Activated CD8-positive, alpha-beta T cell treated with anti-CD3 and anti-CD28 coated beads for 36 hours (primary cell): ENCODE measurements at regions of chr7 and their contacts with region 1.

Region 1: GRCh38 chr7:116929914-116930913 is 23.1 kb upstream of the ST7 start:
- DNase-seq: peak; percentile 85
- ATAC-seq: peak; percentile 92
- H3K4me3 Mint-ChIP-seq: no peak overlapping the region
- H3K27ac Mint-ChIP-seq: no peak overlapping the region
- H3K4me1 Mint-ChIP-seq: peaks cover 3% of the 10 kb centered on the region
- H3K27me3 Mint-ChIP-seq: peaks cover 1% of the 10 kb centered on the region
- CTCF ChIP-seq: peak; percentile 93

Region 2: DNA sequence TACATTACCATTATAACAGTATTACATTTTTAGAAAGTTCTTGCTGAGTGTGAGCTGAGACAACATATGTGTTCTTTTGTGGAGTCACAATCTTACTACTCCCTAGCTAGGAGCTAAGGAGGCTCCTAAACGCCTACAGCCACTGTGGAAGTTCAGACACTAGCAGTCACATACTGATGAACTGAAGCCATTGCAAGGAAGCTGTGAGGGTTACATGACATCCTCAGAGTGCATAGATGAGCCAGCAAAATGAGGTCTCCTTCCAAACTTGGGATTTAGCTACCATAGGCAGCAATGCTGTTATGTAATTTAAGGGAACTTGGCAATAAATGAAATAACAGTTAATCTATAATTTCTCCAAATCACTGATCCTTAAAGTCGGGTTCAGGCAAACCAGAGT is 12.3 kb after region 1 on chr7:
- CTCF ChIA-PET with region 1: interaction called, 32 read pairs
- POLR2A ChIA-PET with region 1: no interaction called
- intact Hi-C with region 1: no loop called
- DNase-seq: no peak
- ATAC-seq: no peak
- H3K4me3 Mint-ChIP-seq: no peak overlapping the region
- H3K27ac Mint-ChIP-seq: no peak overlapping the region
- H3K4me1 Mint-ChIP-seq: no peaks in the 10 kb centered on the region
- H3K27me3 Mint-ChIP-seq: peaks cover 3% of the 10 kb centered on the region
- CTCF ChIP-seq: no peak

Region 3: DNA sequence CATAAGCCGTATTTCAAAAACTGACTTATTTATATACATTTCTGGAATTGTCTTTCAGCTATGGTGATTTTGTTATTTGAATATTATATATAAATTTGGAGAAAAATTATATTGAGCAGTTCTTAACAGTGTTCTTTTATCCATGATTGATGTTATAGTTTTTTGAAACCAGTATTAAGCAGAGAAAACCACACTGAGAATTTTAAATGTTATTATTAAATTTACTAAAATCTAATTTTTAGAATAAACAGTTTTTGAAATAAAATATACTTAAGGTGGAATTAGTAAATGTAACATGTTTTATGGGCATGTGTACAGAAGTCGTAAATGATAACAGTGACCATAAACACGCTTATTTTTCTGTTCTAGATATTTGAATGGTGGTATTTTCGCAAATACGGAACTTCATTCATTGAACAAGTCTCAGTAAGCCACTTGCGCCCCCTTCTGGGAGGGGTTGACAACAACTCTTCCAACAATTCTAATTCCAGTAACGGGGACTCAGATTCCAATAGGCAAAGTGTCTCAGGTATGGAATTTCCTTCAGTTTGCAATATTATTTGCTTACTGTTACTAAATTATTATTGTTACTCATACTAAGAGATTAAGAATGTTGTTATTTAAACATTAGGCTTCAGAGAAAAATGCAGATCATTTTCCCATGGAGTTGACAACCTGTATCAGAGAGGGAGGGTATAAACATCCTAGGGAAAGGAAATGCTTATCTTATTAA is 189.1 kb after region 1 on chr7:
- CTCF ChIA-PET with region 1: interaction called, 113 read pairs
- POLR2A ChIA-PET with region 1: no interaction called
- intact Hi-C with region 1: no loop called
- DNase-seq: peak; percentile 85
- ATAC-seq: no peak
- H3K4me3 Mint-ChIP-seq: no peak overlapping the region
- H3K27ac Mint-ChIP-seq: no peak overlapping the region
- H3K4me1 Mint-ChIP-seq: peaks cover 2% of the 10 kb centered on the region
- H3K27me3 Mint-ChIP-seq: no peaks in the 10 kb centered on the region
- CTCF ChIP-seq: peak; percentile 97

Region 4: GRCh38 chr7:117127585-117128168 is 197.5 kb after region 1 on chr7:
- CTCF ChIA-PET with region 1: interaction called, 113 read pairs
- POLR2A ChIA-PET with region 1: no interaction called
- intact Hi-C with region 1: loop called (anchors 2 kb)
- DNase-seq: peak; percentile 75
- ATAC-seq: peak; percentile 29
- H3K4me3 Mint-ChIP-seq: no peak overlapping the region
- H3K27ac Mint-ChIP-seq: no peak overlapping the region
- H3K4me1 Mint-ChIP-seq: peaks cover 12% of the 10 kb centered on the region
- H3K27me3 Mint-ChIP-seq: no peaks in the 10 kb centered on the region
- CTCF ChIP-seq: peak; percentile 97

Region 5: DNA sequence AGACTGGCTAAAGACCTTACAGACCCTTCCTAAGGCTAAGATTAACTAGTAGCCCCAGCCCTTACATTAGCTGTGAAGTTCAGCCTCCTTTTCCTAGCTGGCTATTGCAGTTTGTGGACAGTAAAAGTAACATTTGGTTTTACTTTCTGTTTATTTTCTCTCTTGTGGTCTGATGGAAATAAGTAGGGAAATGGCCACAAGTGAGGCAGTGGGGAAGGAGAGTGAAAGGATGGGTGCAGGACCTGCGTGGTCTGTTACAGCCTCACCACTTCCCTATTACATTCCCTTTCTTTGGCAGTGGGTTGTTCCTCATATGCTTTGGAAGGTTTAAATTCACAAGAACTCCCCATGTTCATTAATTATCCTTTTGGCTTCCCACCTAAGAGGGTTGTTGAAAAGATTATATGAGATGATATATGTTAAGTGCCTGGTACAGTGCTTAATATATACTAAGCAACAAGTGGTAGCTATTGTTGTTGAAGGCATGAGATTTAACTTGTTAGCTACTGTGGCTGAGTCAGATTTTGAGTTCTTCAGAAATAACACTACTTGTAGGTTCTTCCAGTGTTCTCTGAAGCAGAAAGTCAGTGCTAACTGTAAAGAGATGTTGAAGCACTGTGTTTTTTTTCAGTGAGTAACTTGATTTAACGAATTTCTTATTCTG is 204.8 kb after region 1 on chr7:
- CTCF ChIA-PET with region 1: interaction called, 14 read pairs
- POLR2A ChIA-PET with region 1: no interaction called
- intact Hi-C with region 1: no loop called
- DNase-seq: no peak
- ATAC-seq: no peak
- H3K4me3 Mint-ChIP-seq: no peak overlapping the region
- H3K27ac Mint-ChIP-seq: no peak overlapping the region
- H3K4me1 Mint-ChIP-seq: peaks cover 5% of the 10 kb centered on the region
- H3K27me3 Mint-ChIP-seq: no peaks in the 10 kb centered on the region
- CTCF ChIP-seq: no peak